Testis (tissue), 5 donors: ENCODE measurements at regions of chr7 and their contacts with region 1.

Region 1: GRCh38 chr7:129825496-129826267 is 127.1 kb downstream of the UBE2H start:
- DNase-seq: peak; percentile 93
- H3K4me3 ChIP-seq: peak overlapping the region; percentile 60 to 77
- H3K27ac ChIP-seq: peak overlapping the region; percentile 27 to 63
- H3K4me1 ChIP-seq: peaks cover 19% of the 10 kb centered on the region
- H3K27me3 ChIP-seq: no peaks in the 10 kb centered on the region
- CTCF ChIP-seq: peak; percentile 49 to 100 (median 69)
- POLR2A ChIP-seq: no peak

Region 2: DNA sequence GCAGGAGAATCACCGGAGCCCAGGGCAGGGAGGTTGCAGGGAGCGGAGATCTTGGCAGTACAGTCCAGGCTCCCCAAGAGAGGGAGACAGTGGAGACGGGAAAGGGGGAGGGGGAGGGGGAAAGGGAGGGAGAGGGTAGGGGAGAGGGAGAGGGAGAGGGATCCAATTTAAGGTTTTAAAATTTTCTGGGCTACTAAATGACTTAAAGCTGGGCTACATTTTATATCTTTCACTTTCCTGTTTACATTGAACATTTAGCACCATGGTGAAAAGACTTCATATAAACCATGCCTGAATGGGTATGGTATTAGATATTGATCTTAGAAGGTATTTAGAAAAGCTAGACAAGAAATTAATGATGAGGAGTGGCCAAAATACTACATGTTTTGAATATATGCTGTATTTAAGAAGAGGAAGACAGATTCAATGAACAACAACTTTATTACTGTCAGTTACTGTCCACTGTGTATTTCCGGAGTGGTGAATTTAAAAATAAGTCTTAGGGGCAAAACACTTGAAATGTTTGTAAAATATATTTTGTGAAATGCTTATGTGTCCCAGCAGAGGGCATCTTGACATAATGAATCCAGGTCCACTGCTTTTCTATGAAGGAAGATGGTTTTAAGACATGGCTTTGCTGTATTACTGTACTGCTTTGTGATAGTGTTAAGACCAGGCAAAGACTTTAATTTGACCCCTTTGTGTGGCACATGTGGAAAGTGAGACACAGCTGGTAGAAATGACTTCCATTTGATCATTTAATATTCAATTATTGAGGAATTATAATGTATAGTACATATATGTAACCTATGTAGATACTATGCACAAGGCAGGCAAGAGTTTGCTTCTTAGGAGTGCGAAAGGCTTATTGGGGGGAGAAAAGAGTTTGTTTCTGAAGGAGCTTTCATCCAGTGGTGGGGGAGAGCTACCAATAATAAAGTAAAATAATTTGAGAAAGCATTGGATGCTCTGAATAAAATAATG is 161.4 kb before region 1 on chr7:
- intact Hi-C with region 1: loop called (anchors 10 kb)
- DNase-seq: no peak
- H3K4me3 ChIP-seq: no peak overlapping the region
- H3K27ac ChIP-seq: no peak overlapping the region
- H3K4me1 ChIP-seq: peaks cover 5% of the 10 kb centered on the region
- H3K27me3 ChIP-seq: no peaks in the 10 kb centered on the region
- CTCF ChIP-seq: peak; percentile 49 to 64 (median 49)
- POLR2A ChIP-seq: no peak

Region 3: GRCh38 chr7:129952653-129953560 is 127.2 kb after region 1 on chr7 and contains the start of gene UBE2H:
- intact Hi-C with region 1: loop called (anchors 10 kb)
- DNase-seq: peak; percentile 96
- H3K4me3 ChIP-seq: peak within 1 kb of the TSS; percentile 98 to 99
- H3K27ac ChIP-seq: peak within 1 kb of the TSS; percentile 98 to 99
- H3K4me1 ChIP-seq: peaks cover 22% of the 10 kb centered on the region
- H3K27me3 ChIP-seq: no peaks in the 10 kb centered on the region
- CTCF ChIP-seq: peak in 2 of 3 experiments; percentile 4 to 26
- POLR2A ChIP-seq: peak; percentile 100
- total RNA-seq, gene UBE2H: 126 to 130 TPM

Region 4: GRCh38 chr7:130009848-130010688 is 184.4 kb after region 1 on chr7:
- intact Hi-C with region 1: loop called (anchors 10 kb)
- DNase-seq: no peak
- H3K4me3 ChIP-seq: no peak overlapping the region
- H3K27ac ChIP-seq: peak overlapping the region in 1 of 2 donors; percentile 11
- H3K4me1 ChIP-seq: peaks cover 8% of the 10 kb centered on the region
- H3K27me3 ChIP-seq: no peaks in the 10 kb centered on the region
- CTCF ChIP-seq: no peak
- POLR2A ChIP-seq: no peak